Left lung (tissue), 14 donors: ENCODE measurements at regions of chr6 and their contacts with region 1.

Region 1: DNA sequence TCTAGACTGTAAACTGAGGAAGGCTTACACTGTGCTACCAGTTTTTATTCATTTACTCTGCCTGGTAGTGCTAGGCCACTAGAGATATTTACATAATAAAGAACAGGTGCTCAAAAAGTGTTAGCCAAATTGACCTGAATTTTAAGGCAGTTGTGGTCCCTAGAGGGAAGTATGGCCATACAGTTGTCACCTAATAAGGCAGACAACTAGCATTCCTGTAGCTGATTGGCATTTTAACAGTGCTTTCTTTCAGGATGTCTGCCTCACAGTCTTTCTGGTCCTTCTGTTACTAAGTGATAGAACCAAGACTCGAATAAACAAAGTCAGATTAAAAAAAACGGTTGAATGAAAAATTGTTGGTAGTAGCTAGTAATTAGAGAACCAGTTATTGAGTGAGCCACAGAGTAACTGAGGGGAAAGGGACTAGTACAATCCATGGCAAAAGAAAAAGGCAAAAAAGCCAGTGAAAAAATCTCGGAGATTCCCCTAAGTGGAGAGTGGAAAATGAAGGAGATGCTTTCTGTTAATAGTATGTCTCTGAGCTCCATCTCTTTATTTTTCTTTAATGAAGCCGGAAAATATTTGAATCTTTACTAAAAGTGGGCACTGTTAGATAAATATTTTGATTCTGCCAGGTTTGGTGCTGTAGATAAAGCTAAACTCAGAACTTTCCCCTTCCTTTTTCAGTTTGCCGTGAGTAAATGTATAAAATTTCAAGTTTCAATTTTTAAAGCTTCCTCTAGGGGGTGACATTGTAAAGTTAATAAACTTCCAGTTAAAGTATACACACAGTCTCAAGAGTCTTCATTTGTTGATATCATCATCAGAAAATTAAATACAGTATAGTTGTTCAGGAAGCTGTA is 9.1 kb downstream of the VTA1 start:
- DNase-seq: peak in 2 of 4 donors; percentile 38 to 43
- ATAC-seq: peak; percentile 82
- H3K4me3 ChIP-seq: no peak overlapping the region
- H3K27ac ChIP-seq: no peak overlapping the region
- H3K4me1 ChIP-seq: peaks cover 0 to 10% of the 10 kb centered on the region in 2 donors
- H3K27me3 ChIP-seq: no peaks in the 10 kb centered on the region
- CTCF ChIP-seq: peak; percentile 27 to 32

Region 2: DNA sequence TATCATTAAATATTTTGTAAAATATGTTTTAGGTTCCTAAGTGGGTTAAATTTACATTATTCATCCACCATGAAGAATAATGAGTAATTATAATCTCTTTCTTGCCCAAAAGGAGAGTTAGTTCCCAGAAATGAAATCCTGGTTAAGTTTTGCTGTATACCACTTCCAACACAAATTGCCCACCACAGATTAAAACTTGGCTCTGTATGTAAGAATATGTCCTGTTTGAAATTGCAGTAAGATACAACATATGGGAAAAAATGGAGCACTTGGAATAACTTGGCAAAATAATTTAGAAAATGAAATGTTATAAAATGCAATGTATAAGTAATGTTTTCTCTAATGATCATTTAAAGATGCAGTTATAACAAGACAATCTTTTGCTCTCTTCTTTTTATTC is 87.7 kb before region 1 on chr6:
- intact Hi-C with region 1: no loop called
- DNase-seq: no peak
- ATAC-seq: no peak
- H3K4me3 ChIP-seq: no peak overlapping the region
- H3K27ac ChIP-seq: no peak overlapping the region
- H3K4me1 ChIP-seq: no peaks in the 10 kb centered on the region
- H3K27me3 ChIP-seq: no peaks in the 10 kb centered on the region
- CTCF ChIP-seq: no peak

Region 3: GRCh38 chr6:142387997-142388815 is 232.1 kb after region 1 on chr6:
- intact Hi-C with region 1: loop called in 1 of 2 experiments (anchors 10 kb)
- DNase-seq: peak in 2 of 4 donors; percentile 51 to 68
- ATAC-seq: peak; percentile 81
- H3K4me3 ChIP-seq: no peak overlapping the region
- H3K27ac ChIP-seq: no peak overlapping the region
- H3K4me1 ChIP-seq: no peaks in the 10 kb centered on the region
- H3K27me3 ChIP-seq: no peaks in the 10 kb centered on the region
- CTCF ChIP-seq: peak; percentile 45 to 60